ENCODE measurements at regions of chr16 and their contacts with region 1.

Region 1: DNA sequence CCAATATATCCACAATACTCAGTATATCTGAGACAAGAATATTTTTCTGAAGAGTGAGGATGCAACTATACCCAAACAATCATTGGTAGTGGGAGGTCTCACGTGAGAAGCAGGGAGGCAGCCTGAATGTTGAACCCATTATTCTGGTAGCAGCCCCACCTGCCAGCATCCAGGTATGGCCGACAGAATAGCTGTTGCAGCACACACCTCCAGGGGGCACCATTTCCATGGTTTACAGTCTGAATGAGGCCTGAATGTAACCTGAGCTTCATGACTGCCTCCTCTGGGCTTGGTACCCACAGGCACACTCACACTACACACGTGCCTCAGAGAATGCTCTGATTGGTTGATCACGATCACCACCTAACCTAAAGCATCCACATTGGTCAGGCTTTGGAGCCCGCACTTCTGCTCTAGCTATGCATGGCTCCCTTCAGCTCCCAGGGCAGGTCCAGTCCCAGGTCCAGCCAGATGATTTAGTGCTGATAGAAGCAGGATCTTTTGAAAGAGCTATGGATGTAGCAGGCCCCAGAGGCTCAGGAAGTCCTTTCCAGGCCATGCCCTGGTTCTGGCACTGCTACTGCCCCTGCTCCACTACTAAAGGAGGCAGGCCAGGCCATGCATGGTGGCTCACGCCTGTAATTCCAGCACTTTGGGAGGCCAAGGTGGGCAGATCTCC is 11.0 kb upstream of the CBFB start:
- DNase-seq: peak; percentile 95 to 97
- H3K4me3 ChIP-seq: no peak overlapping the region
- H3K4me3 Mint-ChIP-seq: no peak overlapping the region
- H3K27ac Mint-ChIP-seq: no peak overlapping the region
- H3K4me1 ChIP-seq: peaks cover 17% of the 10 kb centered on the region
- H3K4me1 Mint-ChIP-seq: peaks cover 19% of the 10 kb centered on the region
- H3K27me3 ChIP-seq: no peaks in the 10 kb centered on the region
- H3K27me3 Mint-ChIP-seq: no peaks in the 10 kb centered on the region
- CTCF ChIP-seq: peak; percentile 87 to 88

Region 2: GRCh38 chr16:66696669-66697630 is 321.0 kb before region 1 on chr16 and contains the start of gene CMTM4:
- CTCF ChIA-PET with region 1: no interaction called
- POLR2A ChIA-PET with region 1: no interaction called
- intact Hi-C with region 1: no loop called
- DNase-seq: peak; percentile 89 to 96
- H3K4me3 ChIP-seq: peak within 1 kb of the TSS; percentile 97
- H3K4me3 Mint-ChIP-seq: peak within 1 kb of the TSS; percentile 94
- H3K27ac Mint-ChIP-seq: peak within 1 kb of the TSS; percentile 78
- H3K4me1 ChIP-seq: peaks cover 17% of the 10 kb centered on the region
- H3K4me1 Mint-ChIP-seq: peaks cover 20% of the 10 kb centered on the region
- H3K27me3 ChIP-seq: no peaks in the 10 kb centered on the region
- H3K27me3 Mint-ChIP-seq: no peaks in the 10 kb centered on the region
- CTCF ChIP-seq: peak in 1 of 2 experiments; percentile 47
- total RNA-seq, gene CMTM4: 106 and 108 TPM in 2 replicates

Region 3: GRCh38 chr16:66947302-66948065 is 70.5 kb before region 1 on chr16:
- CTCF ChIA-PET with region 1: interaction called, 4 read pairs
- POLR2A ChIA-PET with region 1: no interaction called
- intact Hi-C with region 1: loop called (anchors 2 kb)
- DNase-seq: peak; percentile 81 to 87
- H3K4me3 ChIP-seq: no peak overlapping the region
- H3K4me3 Mint-ChIP-seq: peak overlapping the region; percentile 40
- H3K27ac Mint-ChIP-seq: peak overlapping the region; percentile 48
- H3K4me1 ChIP-seq: no peaks in the 10 kb centered on the region
- H3K4me1 Mint-ChIP-seq: no peaks in the 10 kb centered on the region
- H3K27me3 ChIP-seq: no peaks in the 10 kb centered on the region
- H3K27me3 Mint-ChIP-seq: no peaks in the 10 kb centered on the region
- CTCF ChIP-seq: peak; percentile 82 to 87

Region 4: GRCh38 chr16:66977341-66978113 is 40.4 kb before region 1 on chr16:
- CTCF ChIA-PET with region 1: interaction called, 4 read pairs
- POLR2A ChIA-PET with region 1: no interaction called
- intact Hi-C with region 1: loop called (anchors 1 kb)
- DNase-seq: peak; percentile 89 to 95
- H3K4me3 ChIP-seq: no peak overlapping the region
- H3K4me3 Mint-ChIP-seq: no peak overlapping the region
- H3K27ac Mint-ChIP-seq: no peak overlapping the region
- H3K4me1 ChIP-seq: no peaks in the 10 kb centered on the region
- H3K4me1 Mint-ChIP-seq: no peaks in the 10 kb centered on the region
- H3K27me3 ChIP-seq: no peaks in the 10 kb centered on the region
- H3K27me3 Mint-ChIP-seq: no peaks in the 10 kb centered on the region
- CTCF ChIP-seq: peak; percentile 98 to 99

Region 5: DNA sequence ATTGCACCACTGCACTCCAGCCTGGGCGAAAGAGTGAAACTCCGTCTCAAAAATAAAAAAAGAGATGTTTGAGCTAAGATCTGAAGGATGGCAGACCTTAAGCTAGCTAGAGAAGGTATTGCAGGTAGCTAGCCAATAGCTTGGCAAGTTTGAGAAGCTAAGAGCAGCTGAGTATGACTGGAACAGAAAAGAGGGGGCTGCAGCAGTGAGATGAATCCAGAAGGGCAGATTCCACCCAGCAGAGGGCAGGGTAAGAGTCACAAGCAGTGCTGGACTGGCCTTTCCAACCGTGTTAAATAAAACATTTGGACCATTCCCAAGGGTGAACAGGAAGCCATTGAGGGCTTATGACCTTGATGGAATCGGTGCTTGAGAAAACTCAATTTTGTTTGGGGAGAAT is 86.1 kb after region 1 on chr16:
- CTCF ChIA-PET with region 1: interaction called, 28 read pairs
- POLR2A ChIA-PET with region 1: no interaction called
- intact Hi-C with region 1: loop called (anchors 1 kb)
- DNase-seq: peak; percentile 59 to 62
- H3K4me3 ChIP-seq: no peak overlapping the region
- H3K4me3 Mint-ChIP-seq: no peak overlapping the region
- H3K27ac Mint-ChIP-seq: peak overlapping the region; percentile 15
- H3K4me1 ChIP-seq: peaks cover 7% of the 10 kb centered on the region
- H3K4me1 Mint-ChIP-seq: peaks cover 6% of the 10 kb centered on the region
- H3K27me3 ChIP-seq: no peaks in the 10 kb centered on the region
- H3K27me3 Mint-ChIP-seq: no peaks in the 10 kb centered on the region
- CTCF ChIP-seq: peak; percentile 49 to 56

Region 6: DNA sequence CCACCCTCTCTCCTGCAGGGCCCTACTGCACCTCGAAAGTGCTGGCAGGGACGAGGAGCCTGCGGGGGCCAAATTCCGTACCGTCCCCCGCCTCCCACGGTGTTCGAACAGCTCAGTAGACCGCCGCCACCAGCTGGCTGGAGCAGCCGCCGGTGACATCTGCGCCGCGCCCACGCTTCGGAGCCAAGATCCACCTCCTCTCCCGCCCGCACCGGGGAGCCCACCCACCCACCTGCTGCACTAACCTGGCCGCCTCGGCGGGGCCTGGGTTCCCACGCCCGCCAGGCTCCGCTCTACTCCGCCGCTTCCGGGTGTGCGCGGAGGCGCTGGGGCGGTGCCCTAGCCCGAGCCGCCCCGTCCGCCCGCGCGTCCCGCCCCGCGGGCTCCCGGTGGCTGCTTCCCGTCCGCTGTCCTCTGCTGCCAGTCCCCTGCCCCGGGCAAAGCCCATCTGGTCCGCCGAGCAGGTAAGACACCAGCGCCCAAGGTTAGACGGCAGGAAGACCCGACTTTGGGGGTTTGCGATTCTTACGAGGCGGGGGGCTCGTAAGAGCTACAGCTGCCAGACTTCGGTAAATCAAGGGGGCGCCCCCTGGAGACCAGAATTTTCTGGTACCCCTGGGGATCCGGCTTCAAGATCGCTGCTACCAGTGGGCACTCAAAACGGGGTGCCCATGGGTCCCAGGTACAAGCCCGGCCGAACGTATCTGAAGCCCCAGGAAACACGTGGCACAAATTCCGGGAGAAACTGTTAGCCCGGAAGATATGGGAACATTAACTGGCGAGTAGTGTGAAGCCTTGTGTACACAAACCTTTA is 141.9 kb after region 1 on chr16 and contains the starts of genes FBXL8 and TRADD:
- CTCF ChIA-PET with region 1: interaction called, 57 read pairs
- POLR2A ChIA-PET with region 1: interaction called, 6 read pairs
- intact Hi-C with region 1: loop called (anchors 1 kb)
- DNase-seq: peak; percentile 77 to 89
- H3K4me3 ChIP-seq: peak within 1 kb of the TSS; percentile 94
- H3K4me3 Mint-ChIP-seq: peak within 1 kb of the TSS; percentile 86
- H3K27ac Mint-ChIP-seq: peak within 1 kb of the TSS; percentile 82
- H3K4me1 ChIP-seq: peaks cover 6% of the 10 kb centered on the region; the same call in 1 of the 2 replicates
- H3K4me1 Mint-ChIP-seq: peaks cover 6% of the 10 kb centered on the region
- H3K27me3 ChIP-seq: no peaks in the 10 kb centered on the region
- H3K27me3 Mint-ChIP-seq: no peaks in the 10 kb centered on the region
- CTCF ChIP-seq: peak; percentile 67 to 70
- total RNA-seq, gene FBXL8: 27.6 and 31.5 TPM in 2 replicates
- total RNA-seq, gene TRADD: 16.8 and 18.3 TPM in 2 replicates

Region 7: DNA sequence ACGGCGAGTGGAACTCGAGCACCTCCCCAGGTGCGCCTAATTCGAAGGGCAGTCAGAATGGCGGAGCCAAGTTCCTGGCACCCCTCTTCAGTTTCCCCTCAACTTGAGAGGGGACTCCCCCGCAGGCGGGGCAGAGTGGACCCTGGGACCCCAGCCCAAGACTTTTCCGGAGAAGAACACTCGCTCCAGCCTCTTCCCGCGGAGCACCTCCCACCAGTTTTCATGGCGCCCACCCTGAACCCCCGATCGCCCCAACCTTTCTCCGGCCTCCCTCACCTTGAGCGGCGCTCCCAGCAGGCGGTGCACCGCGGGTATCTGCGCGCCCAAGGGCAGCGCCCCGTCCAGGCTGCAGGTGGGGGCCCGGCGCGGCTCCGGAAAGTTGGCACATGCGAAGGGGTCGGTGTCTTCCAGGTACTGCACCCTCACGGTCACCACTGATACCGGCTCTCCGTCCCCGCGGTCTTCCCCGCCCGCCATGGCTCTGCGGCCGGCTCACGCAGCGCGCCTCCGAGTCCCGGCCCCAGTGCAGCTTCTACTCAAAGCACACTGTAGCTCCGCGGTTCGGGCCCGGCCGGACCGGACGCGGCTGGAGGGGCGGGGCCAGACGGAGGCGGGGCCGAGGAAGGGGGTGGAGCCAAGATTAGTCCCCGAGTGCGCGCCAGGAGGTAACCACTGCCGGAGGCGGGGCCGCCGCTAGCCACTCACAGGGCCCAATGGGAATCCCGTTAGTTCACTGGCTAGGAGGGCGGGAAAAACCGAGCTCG is 229.2 kb after region 1 on chr16 and contains the start of gene FHOD1:
- CTCF ChIA-PET with region 1: interaction called, 16 read pairs
- POLR2A ChIA-PET with region 1: no interaction called
- intact Hi-C with region 1: no loop called
- DNase-seq: peak; percentile 98 to 99
- H3K4me3 ChIP-seq: peak within 1 kb of the TSS; percentile 72
- H3K4me3 Mint-ChIP-seq: peak within 1 kb of the TSS; percentile 95
- H3K27ac Mint-ChIP-seq: peak within 1 kb of the TSS; percentile 87
- H3K4me1 ChIP-seq: peaks cover 27% of the 10 kb centered on the region
- H3K4me1 Mint-ChIP-seq: peaks cover 42% of the 10 kb centered on the region
- H3K27me3 ChIP-seq: peaks cover 6% of the 10 kb centered on the region
- H3K27me3 Mint-ChIP-seq: peaks cover 18% of the 10 kb centered on the region
- CTCF ChIP-seq: peak in 1 of 2 experiments; percentile 36
- total RNA-seq, gene FHOD1: 59.1 and 69.0 TPM in 2 replicates